Posterior vena cava (tissue), 2 donors: ENCODE measurements at regions of chr5 and their contacts with region 1.

Region 1: GRCh38 chr5:67246108-67246507 is 49.5 kb upstream of the CD180 start:
- DNase-seq: no peak

Region 2: GRCh38 chr5:67234671-67235176 is 11.4 kb before region 1 on chr5:
- intact Hi-C with region 1: no loop called
- DNase-seq: no peak

Region 3: GRCh38 chr5:67331296-67331925 is 85.3 kb after region 1 on chr5:
- intact Hi-C with region 1: no loop called
- DNase-seq: no peak

Region 4: GRCh38 chr5:67724412-67725135 is 478.5 kb after region 1 on chr5:
- intact Hi-C with region 1: no loop called
- DNase-seq: no peak

Region 5: GRCh38 chr5:68252673-68253623 is 1006.8 kb after region 1 on chr5:
- intact Hi-C with region 1: loop called in 1 of 2 experiments (anchors 5 kb)
- DNase-seq: no peak